Activated CD8-positive, alpha-beta T cell treated with anti-CD3 and anti-CD28 coated beads for 36 hours (primary cell): ENCODE measurements at regions of chr3 and their contacts with region 1.

Region 1: DNA sequence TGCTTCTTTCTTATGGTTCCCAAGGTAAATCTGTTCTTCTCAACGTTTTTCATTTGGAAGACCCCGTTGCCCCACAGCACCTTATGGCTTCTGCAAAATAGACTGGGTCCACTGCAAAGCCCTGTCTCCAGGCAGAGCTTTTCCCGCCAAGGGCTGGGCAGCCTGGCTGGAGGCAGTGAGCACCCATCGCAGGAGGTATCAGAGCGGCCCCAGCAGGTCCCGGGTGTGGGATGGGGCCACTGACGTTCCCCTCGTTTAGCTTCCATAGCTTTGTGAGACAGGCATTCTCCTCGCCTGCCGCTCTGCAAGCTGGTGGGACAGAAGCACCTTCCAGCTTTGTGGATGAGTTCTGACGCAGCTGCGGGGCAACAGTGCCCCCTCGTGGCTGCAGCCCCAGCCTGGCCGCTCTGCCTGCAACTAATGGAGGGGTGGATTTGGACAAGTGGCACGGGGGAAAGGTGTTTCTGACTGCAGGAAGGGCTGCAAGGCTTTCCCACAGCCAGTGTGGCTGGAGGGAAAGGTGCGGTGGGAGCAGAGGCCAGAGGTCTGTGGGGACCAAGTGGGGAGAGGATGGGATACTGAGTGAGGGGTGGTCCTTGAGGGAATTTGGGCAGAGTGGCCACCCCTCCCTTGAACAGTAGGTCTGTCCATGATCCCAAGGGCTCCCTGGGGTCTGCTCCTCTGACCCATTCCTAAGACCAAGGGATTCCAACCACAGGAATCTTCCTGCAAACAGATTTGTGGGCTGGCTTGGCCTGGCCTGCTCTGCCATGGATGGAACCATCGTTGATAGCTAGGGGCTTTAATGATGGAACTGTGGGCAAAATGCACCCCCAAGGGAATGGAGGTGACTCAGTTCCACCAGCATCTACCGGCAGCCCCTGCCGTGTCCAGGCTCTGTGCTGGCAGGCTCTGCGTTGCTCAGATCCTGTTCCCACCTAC is 99.4 kb downstream of the FBLN2 start:
- DNase-seq: peak; percentile 84
- ATAC-seq: peak; percentile 38
- H3K4me3 Mint-ChIP-seq: no peak overlapping the region
- H3K27ac Mint-ChIP-seq: no peak overlapping the region
- H3K4me1 Mint-ChIP-seq: peaks cover 26% of the 10 kb centered on the region
- H3K27me3 Mint-ChIP-seq: peaks cover 16% of the 10 kb centered on the region
- CTCF ChIP-seq: peak; percentile 98

Region 2: GRCh38 chr3:13479581-13480339 is 168.6 kb before region 1 on chr3 and contains the start of gene HDAC11:
- CTCF ChIA-PET with region 1: interaction called, 63 read pairs
- POLR2A ChIA-PET with region 1: no interaction called
- intact Hi-C with region 1: no loop called
- DNase-seq: peak; percentile 98
- ATAC-seq: peak; percentile 97
- H3K4me3 Mint-ChIP-seq: peak within 1 kb of the TSS; percentile 90
- H3K27ac Mint-ChIP-seq: peak within 1 kb of the TSS; percentile 89
- H3K4me1 Mint-ChIP-seq: peaks cover 20% of the 10 kb centered on the region
- H3K27me3 Mint-ChIP-seq: no peaks in the 10 kb centered on the region
- CTCF ChIP-seq: no peak
- total RNA-seq, gene HDAC11: 1.8 to 2.0 TPM

Region 3: DNA sequence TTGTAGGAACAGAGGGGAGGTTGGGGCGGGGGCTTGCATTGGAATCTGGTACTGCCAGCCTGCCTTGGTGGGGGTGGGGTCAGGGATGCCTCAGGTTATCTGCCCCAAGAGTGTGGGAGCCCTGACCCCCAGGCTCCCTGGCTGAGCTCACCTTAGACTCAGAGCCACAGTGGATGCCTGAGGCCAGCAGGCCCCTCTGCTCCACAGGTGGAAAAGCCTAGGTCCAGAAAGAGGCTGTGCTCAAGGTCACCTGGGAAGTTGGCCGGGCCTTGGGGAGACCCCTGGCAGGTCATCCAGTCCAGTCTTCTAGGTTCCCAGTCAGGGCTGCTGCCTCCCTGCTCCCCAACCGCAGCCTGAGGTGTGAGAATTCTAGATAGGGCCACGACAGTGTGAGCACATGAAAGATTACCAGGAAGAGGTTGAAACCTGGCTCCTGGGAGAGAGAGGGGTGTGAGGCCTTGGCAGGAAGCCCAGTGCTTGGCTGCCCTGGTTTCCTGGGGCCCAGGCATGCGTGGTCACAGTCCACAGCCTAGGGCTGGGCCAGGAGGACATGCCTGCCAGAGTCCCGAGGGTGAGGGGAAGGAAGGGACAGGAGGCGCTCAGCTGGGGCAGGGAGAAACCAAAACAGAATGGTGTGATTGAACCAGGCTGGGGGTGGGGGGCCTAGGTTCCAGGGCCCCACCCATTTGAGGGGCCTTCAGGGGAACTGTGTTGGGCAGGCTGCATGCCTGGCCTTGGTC is 163.3 kb before region 1 on chr3:
- CTCF ChIA-PET with region 1: interaction called, 63 read pairs
- POLR2A ChIA-PET with region 1: no interaction called
- intact Hi-C with region 1: no loop called
- DNase-seq: peak; percentile 14
- ATAC-seq: no peak
- H3K4me3 Mint-ChIP-seq: no peak overlapping the region
- H3K27ac Mint-ChIP-seq: peak overlapping the region; percentile 26
- H3K4me1 Mint-ChIP-seq: peaks cover 19% of the 10 kb centered on the region
- H3K27me3 Mint-ChIP-seq: no peaks in the 10 kb centered on the region
- CTCF ChIP-seq: no peak

Region 4: DNA sequence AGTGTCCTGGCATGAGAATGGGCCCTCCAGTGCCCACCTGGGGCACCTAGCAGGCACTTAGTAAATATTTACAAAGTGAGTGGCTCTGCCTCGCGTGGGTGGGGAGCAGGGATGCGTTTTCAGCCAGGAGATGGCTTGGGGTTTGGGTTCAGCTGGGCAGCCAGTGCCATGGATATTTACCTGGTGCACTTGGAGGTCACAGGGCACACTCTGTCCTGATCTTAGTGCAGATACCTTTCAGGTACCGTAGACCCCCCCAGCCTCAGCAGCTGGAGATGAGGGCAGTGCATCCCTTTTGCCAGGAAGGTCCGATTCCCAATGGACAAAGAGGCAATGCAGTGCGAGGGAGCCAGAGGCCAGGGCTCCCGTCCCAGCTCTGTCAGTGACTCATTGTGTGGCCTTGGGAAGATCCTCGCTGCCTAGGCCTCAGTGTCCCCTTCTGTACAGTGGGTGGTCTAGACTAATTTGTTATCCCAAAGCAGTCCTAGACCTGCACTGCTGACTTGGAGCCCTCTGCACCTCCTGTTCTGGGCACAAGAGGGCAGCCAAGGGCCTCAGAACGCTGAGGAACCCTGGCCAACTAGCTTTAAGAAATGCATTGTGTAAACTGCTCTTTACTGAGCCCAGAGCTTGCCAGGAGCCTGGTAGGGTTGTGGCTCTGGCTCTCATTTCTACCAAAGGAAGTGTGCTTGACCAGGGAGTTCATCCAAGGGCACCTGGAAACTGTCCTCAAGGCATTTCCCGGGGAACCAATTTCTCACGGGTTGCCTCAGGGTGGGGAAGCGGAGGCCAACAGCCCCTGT is 152.2 kb before region 1 on chr3:
- CTCF ChIA-PET with region 1: interaction called, 349 read pairs
- POLR2A ChIA-PET with region 1: interaction called, 5 read pairs
- intact Hi-C with region 1: loop called (anchors 1 kb)
- DNase-seq: peak; percentile 85
- ATAC-seq: peak; percentile 98
- H3K4me3 Mint-ChIP-seq: no peak overlapping the region
- H3K27ac Mint-ChIP-seq: no peak overlapping the region
- H3K4me1 Mint-ChIP-seq: peaks cover 3% of the 10 kb centered on the region
- H3K27me3 Mint-ChIP-seq: no peaks in the 10 kb centered on the region
- CTCF ChIP-seq: peak; percentile 95

Region 5: DNA sequence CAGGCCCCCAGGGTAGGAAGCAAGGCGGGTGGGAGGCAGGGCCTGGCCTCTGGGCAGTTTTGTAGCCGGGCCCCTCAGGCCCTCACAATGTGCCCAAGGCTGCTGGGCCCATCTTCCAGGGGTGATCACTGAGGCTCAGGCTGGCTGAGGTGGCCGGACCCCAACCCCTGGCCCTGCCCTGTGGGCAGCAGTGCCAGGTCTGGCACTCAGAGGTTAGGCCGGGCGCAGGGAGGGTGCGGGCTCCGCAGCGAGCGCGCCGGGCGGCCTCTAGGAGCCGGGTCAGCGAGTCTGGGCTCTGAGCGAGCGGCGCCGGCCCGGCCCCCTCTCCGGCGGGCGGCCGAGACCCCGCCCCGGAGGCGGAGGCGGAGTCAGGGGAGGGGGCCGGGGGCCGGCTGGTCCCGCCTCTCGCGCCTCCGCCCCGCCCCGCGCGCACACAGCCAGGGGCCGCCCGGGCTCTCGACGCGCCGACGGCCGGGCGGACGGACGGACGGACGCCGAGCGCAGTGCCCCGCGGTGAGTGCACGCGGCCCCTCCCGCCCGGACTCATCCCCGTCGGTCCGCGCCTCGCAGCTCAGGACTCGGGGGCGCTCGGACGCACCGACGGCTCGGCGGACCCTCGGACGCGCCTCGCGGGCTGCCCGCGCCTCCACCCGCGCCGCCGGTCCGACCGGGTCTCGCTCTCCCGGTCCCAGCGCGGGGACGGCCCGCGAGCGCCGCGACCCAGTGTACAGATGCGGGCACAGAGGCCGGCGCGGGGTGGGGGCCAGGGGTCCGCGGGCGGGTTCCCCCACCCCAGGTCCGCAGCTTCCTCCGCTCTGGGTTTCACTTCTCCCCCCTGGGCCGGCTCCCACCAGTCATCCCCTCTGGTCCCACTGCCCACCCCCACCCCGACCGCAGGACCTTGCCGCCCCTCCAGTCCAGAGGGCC is 99.4 kb before region 1 on chr3 and contains the start of gene FBLN2:
- CTCF ChIA-PET with region 1: interaction called, 10 read pairs
- POLR2A ChIA-PET with region 1: no interaction called
- intact Hi-C with region 1: no loop called
- DNase-seq: no peak
- ATAC-seq: peak; percentile 13
- H3K4me3 Mint-ChIP-seq: peak within 1 kb of the TSS; percentile 65
- H3K27ac Mint-ChIP-seq: peak within 1 kb of the TSS; percentile 28
- H3K4me1 Mint-ChIP-seq: peaks cover 59% of the 10 kb centered on the region
- H3K27me3 Mint-ChIP-seq: peaks cover 24% of the 10 kb centered on the region
- CTCF ChIP-seq: no peak
- total RNA-seq, gene FBLN2: 8.4 to 13.7 TPM

Region 6: DNA sequence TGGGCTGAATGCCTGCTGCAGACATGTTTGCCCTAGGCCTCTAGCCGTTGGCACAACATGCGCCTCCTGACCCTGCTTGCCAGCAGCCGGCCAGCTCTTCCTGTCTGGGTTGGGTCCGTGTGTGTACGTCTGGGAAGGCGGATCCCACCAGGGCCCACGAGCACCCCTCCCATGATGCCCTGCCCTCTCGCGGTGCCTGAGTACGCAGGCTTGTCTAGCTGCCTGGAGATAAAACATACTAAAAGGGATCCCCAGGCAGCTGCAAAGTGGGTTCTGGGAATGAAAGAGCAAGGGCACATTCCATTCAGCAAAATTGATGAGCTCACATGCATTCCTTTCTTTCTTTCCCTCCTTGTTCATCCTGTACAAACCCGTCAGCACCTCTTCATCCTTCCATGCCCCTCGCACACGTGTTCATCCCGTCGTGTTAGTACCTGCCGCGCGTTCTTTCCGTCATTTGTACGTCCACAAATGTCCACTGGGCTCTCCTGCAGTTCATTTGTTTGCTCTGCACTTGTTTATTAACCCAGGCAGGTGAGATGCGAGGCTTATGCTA is 25.2 kb before region 1 on chr3:
- CTCF ChIA-PET with region 1: interaction called, 16 read pairs
- POLR2A ChIA-PET with region 1: no interaction called
- intact Hi-C with region 1: no loop called
- DNase-seq: no peak
- ATAC-seq: no peak
- H3K4me3 Mint-ChIP-seq: no peak overlapping the region
- H3K27ac Mint-ChIP-seq: no peak overlapping the region
- H3K4me1 Mint-ChIP-seq: peaks cover 2% of the 10 kb centered on the region
- H3K27me3 Mint-ChIP-seq: no peaks in the 10 kb centered on the region
- CTCF ChIP-seq: no peak